Naive thymus-derived CD4-positive, alpha-beta T cell (primary cell): ENCODE measurements at regions of chr3 and their contacts with region 1.

Region 1: GRCh38 chr3:40317061-40317855 is 7.8 kb downstream of the EIF1B start:
- DNase-seq: peak in 7 of 9 donors; percentile 42 to 67 (median 51)
- ATAC-seq: peak; percentile 87
- H3K4me3 ChIP-seq: no peak overlapping the region
- H3K4me3 Mint-ChIP-seq: no peak overlapping the region
- H3K27ac ChIP-seq: no peak overlapping the region
- H3K27ac Mint-ChIP-seq: no peak overlapping the region
- H3K4me1 ChIP-seq: no peaks in the 10 kb centered on the region
- H3K4me1 Mint-ChIP-seq: peaks cover 0 to 15% (median 7%) of the 10 kb centered on the region in 7 donors
- H3K27me3 ChIP-seq: no peaks in the 10 kb centered on the region
- H3K27me3 Mint-ChIP-seq: no peaks in the 10 kb centered on the region

Region 2: GRCh38 chr3:40191850-40192448 is 125.3 kb before region 1 on chr3:
- CTCF ChIA-PET with region 1: interaction called, 90 read pairs
- POLR2A ChIA-PET with region 1: interaction called, 3 read pairs
- intact Hi-C with region 1: loop called (anchors 1 kb)
- DNase-seq: peak; percentile 7 to 55 (median 38)
- ATAC-seq: peak; percentile 85
- H3K4me3 ChIP-seq: no peak overlapping the region
- H3K4me3 Mint-ChIP-seq: no peak overlapping the region
- H3K27ac ChIP-seq: no peak overlapping the region
- H3K27ac Mint-ChIP-seq: no peak overlapping the region
- H3K4me1 ChIP-seq: no peaks in the 10 kb centered on the region
- H3K4me1 Mint-ChIP-seq: no peaks in the 10 kb centered on the region
- H3K27me3 ChIP-seq: no peaks in the 10 kb centered on the region
- H3K27me3 Mint-ChIP-seq: no peaks in the 10 kb centered on the region

Region 3: GRCh38 chr3:40237889-40238571 is 79.2 kb before region 1 on chr3:
- CTCF ChIA-PET with region 1: no interaction called
- POLR2A ChIA-PET with region 1: no interaction called
- intact Hi-C with region 1: no loop called
- DNase-seq: no peak
- ATAC-seq: no peak
- H3K4me3 ChIP-seq: no peak overlapping the region
- H3K4me3 Mint-ChIP-seq: no peak overlapping the region
- H3K27ac ChIP-seq: no peak overlapping the region
- H3K27ac Mint-ChIP-seq: no peak overlapping the region
- H3K4me1 ChIP-seq: no peaks in the 10 kb centered on the region
- H3K4me1 Mint-ChIP-seq: no peaks in the 10 kb centered on the region
- H3K27me3 ChIP-seq: no peaks in the 10 kb centered on the region
- H3K27me3 Mint-ChIP-seq: no peaks in the 10 kb centered on the region

Region 4: DNA sequence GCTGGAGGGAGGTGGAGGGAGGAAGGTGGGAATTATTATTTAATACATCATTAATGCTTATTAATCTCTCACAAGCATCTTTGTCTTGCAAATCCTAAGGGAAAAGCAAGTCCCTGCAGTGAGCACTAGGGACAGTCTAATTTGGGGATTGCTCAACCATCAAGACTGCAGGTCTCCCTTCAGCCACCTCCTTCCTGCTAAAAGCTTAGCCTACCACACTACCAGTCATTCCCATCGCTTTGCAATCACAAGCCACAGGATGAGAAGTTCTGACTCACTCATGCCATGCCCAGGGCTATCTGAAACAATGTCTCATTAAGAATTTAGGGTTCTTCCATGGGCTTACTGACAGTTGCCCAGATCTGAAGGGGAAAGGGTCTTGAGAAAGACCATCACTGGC is 58.7 kb before region 1 on chr3:
- CTCF ChIA-PET with region 1: no interaction called
- POLR2A ChIA-PET with region 1: no interaction called
- intact Hi-C with region 1: no loop called
- DNase-seq: no peak
- ATAC-seq: peak; percentile 29
- H3K4me3 ChIP-seq: no peak overlapping the region
- H3K4me3 Mint-ChIP-seq: no peak overlapping the region
- H3K27ac ChIP-seq: no peak overlapping the region
- H3K27ac Mint-ChIP-seq: no peak overlapping the region
- H3K4me1 ChIP-seq: no peaks in the 10 kb centered on the region
- H3K4me1 Mint-ChIP-seq: no peaks in the 10 kb centered on the region
- H3K27me3 ChIP-seq: no peaks in the 10 kb centered on the region
- H3K27me3 Mint-ChIP-seq: no peaks in the 10 kb centered on the region

Region 5: DNA sequence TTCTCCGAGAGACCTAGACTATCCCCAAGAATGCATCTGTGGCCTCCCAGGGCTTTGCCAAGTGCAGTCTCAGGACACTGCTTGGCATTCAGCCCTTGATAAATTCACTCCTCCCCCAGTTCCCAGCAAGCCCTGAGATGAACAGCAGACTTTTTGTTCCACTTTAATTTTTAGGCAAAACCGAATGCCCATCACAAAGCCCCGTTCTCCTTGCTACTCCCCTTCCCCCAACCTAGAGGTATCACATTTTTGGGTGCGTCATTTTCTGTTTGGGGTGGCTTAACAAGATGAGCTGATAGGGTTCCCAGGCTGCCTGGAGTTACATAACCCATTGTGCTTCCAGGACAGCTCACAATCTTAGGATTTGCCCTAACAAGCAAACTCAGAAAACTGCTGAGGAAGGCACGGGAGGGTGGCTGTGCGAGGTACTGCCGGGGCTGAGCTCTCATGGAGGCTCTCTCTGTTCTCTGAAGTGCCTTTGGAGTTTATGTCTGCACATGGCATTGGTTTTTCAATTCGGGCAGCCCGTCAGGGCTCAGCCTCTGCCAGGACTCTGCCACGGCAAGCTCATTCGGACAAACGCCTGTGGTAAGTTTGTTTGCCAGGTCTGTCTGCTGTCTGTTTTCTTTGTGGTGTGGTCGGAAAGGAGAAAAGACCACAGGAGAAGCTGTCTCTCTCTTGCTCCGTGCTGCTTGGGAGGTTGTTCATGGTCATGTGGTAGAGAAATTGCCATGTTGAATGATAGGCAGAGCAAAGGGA is 1773.9 kb after region 1 on chr3 and contains the start of gene TRAK1:
- CTCF ChIA-PET with region 1: no interaction called
- POLR2A ChIA-PET with region 1: no interaction called
- intact Hi-C with region 1: loop called in 1 of 2 experiments (anchors 10 kb)
- DNase-seq: no peak
- ATAC-seq: no peak
- H3K4me3 ChIP-seq: no peak within 1 kb of the TSS
- H3K4me3 Mint-ChIP-seq: no peak within 1 kb of the TSS
- H3K27ac ChIP-seq: no peak within 1 kb of the TSS
- H3K27ac Mint-ChIP-seq: peak within 1 kb of the TSS in 8 of 9 donors; percentile 14 to 75 (median 46)
- H3K4me1 ChIP-seq: no peaks in the 10 kb centered on the region
- H3K4me1 Mint-ChIP-seq: peaks cover 18 to 36% (median 27%) of the 10 kb centered on the region in 7 donors
- H3K27me3 ChIP-seq: no peaks in the 10 kb centered on the region
- H3K27me3 Mint-ChIP-seq: no peaks in the 10 kb centered on the region
- total RNA-seq, gene TRAK1: 13.2 to 30.4 (median 20.4) TPM